AG04450 (cell line): ENCODE measurements at regions of chr10 and their contacts with region 1.

Region 1: GRCh38 chr10:97210543-97210961 is 24.8 kb upstream of the SLIT1 start:
- DNase-seq: peak; percentile 44
- H3K4me3 ChIP-seq: no peak overlapping the region
- H3K27ac ChIP-seq: no peak overlapping the region
- H3K27me3 ChIP-seq: peaks cover 7% of the 10 kb centered on the region
- CTCF ChIP-seq: peak; percentile 96

Region 2: GRCh38 chr10:96764425-96765060 is 446.0 kb before region 1 on chr10:
- CTCF ChIA-PET with region 1: interaction called, 21 read pairs
- POLR2A ChIA-PET with region 1: no interaction called
- DNase-seq: no peak
- H3K4me3 ChIP-seq: no peak overlapping the region
- H3K27ac ChIP-seq: no peak overlapping the region
- H3K27me3 ChIP-seq: peaks cover 4% of the 10 kb centered on the region
- CTCF ChIP-seq: no peak

Region 3: DNA sequence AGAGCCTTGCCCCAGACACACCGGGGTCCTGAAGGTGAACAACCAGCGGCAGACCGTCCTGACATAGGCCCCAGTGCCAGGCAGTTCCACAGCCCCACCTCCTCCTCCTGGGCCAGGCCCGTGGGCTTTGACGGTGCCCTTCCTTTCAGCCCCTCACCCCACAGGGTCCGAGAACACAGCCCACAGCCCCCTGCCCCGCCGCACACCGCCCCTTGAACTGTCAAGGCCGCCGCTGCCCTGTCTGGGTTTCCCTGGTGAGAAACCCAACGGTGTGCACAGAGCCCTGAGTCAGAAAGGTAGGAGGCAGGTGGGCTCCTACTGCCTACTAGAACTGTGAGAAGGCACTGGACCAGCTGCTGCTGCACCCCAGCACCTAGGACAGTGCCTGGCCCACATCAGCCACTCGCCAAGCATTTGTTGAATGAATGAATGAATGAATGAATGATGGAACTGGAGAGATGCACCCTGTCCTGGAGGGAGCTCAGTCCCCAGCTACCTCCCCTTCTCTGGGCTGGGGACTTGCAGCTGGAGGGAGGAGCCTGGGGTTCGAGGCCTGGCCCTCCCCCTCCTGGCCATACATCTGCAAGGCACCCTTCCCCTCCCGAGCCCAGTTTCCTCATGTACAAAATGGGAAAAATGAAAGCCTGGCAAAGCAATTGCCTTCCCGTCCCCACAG is 142.7 kb before region 1 on chr10:
- CTCF ChIA-PET with region 1: interaction called, 327 read pairs
- POLR2A ChIA-PET with region 1: interaction called, 3 read pairs
- DNase-seq: no peak
- H3K4me3 ChIP-seq: no peak overlapping the region
- H3K27ac ChIP-seq: no peak overlapping the region
- H3K27me3 ChIP-seq: peaks cover 24% of the 10 kb centered on the region
- CTCF ChIP-seq: no peak

Region 4: DNA sequence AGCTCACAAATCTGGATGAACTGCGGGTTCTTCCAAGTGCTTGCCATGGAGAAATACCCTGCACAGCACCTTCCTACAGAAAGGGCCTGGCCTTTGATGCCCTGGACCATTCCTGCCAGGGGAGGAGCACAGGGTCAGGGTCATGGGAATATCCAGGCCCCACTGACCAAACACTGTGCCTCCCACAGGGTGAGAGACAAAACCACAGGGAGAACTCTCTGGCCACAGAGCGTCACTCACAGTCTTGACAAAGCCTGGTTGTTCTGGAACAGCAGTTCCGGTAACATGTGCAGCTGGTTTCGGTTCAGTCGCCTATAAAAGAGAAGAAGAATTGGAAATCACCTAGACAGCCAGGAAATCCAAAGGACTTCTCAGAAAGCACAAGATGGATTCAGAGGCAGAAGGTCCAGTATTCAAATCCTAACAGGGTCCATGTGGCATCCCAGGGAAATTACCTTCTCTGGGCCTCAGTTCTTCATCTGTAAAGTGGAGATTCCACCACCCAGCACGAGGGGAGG is 52.9 kb before region 1 on chr10:
- CTCF ChIA-PET with region 1: interaction called, 14 read pairs
- POLR2A ChIA-PET with region 1: no interaction called
- DNase-seq: no peak
- H3K4me3 ChIP-seq: no peak overlapping the region
- H3K27ac ChIP-seq: no peak overlapping the region
- H3K27me3 ChIP-seq: peaks cover 2% of the 10 kb centered on the region
- CTCF ChIP-seq: no peak

Region 5: DNA sequence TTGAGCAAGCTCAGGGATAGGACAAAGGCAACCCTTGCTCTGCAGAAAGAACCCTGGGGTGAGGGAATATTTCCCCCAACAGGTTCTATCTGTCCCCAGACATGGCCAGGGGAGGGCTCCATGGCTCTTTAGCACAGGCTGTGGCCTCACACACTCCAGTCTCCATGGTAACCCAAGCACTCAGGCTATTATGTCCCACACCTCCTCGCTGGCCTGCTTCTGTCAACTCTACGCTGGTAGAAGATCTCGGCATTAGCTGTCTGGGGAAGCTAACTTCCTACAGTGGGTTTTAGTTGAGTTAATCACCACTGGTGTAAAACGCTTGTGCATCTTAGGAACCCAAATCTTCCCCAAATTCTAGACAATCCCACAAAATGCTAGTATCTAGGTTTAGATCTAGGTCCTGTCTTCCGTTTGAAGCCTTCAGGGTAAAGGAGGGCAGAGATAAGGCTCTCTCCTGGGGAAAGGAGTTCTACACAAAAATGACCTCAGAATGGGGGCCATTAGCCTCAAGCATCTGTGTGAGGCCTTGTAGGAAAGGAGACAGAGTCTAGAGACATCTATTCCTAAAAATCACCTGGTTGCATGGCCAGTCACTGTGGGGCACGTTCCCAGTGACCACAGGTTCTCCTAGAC is 11.9 kb after region 1 on chr10:
- CTCF ChIA-PET with region 1: interaction called, 74 read pairs
- POLR2A ChIA-PET with region 1: no interaction called
- DNase-seq: no peak
- H3K4me3 ChIP-seq: no peak overlapping the region
- H3K27ac ChIP-seq: no peak overlapping the region
- H3K27me3 ChIP-seq: no peaks in the 10 kb centered on the region
- CTCF ChIP-seq: no peak

Region 6: DNA sequence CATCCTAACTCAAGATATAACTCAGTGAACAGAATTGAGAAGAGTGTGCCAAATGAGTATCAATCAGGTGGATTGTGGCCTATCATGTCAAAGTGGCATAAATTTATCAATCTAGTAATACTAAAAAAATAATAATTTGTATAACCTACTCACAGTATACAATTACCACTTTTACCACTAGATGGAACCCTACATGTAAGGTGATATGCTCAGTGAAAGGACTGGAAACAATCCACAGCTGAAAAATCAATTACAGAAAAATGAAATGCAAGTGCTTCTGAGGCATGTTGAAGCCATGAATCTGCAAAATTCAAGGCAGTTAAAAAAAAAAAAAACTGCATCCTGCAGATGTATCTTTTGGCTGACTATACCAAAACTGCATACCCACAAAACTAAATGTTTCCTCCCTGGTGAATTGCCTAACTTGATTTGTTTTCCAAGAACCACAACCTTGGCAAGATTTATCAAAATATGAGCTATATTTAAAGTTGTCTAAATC is 68.0 kb after region 1 on chr10:
- CTCF ChIA-PET with region 1: interaction called, 18 read pairs
- POLR2A ChIA-PET with region 1: no interaction called
- DNase-seq: peak; percentile 79
- H3K4me3 ChIP-seq: no peak overlapping the region
- H3K27ac ChIP-seq: no peak overlapping the region
- H3K27me3 ChIP-seq: no peaks in the 10 kb centered on the region
- CTCF ChIP-seq: peak; percentile 60